Endothelial cell of umbilical vein (primary cell): ENCODE measurements at regions of chr2 and their contacts with region 1.

Region 1: DNA sequence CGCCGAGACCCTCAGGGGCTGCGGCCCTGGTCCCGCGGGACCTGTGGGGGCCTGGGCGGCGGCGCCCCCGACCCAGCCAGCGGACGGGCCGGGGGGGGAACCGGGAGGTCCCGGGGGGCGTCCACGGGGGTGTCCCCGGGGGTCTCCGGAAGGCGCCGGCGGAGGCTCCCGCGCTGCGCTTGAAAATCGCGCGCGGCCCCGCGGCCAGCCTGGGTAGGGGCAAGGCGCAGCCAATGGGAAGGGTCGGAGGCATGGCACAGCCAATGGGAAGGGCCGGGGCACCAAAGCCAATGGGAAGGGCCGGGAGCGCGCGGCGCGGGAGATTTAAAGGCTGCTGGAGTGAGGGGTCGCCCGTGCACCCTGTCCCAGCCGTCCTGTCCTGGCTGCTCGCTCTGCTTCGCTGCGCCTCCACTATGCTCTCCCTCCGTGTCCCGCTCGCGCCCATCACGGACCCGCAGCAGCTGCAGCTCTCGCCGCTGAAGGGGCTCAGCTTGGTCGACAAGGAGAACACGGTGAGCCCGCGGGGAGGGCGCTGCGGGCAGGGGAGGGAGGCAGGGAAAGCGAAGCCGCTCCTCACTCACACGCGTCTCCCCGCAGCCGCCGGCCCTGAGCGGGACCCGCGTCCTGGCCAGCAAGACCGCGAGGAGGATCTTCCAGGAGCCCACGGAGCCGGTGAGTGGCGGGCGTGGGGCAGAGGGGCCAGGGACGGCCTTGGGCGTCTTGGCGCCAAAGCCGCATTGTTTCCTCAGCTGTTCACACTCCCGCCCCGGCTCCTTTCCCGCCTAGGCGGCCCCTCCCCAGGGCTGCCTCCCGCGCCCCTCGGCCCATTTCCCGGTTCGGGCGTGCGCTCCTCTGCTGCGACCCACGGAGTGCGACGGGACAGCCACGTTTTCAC is at the start of gene RRM2:
- DNase-seq: peak; percentile 88
- H3K4me3 ChIP-seq: peak within 1 kb of the TSS; percentile 59 to 91 (median 70)
- H3K27ac ChIP-seq: peak within 1 kb of the TSS; percentile 60
- H3K4me1 ChIP-seq: peaks cover 53% of the 10 kb centered on the region
- H3K27me3 ChIP-seq: no peaks in the 10 kb centered on the region
- CTCF ChIP-seq: no peak
- POLR2A ChIP-seq: peak; percentile 93
- total RNA-seq, gene RRM2: 220 and 246 TPM in 2 replicates

Region 2: DNA sequence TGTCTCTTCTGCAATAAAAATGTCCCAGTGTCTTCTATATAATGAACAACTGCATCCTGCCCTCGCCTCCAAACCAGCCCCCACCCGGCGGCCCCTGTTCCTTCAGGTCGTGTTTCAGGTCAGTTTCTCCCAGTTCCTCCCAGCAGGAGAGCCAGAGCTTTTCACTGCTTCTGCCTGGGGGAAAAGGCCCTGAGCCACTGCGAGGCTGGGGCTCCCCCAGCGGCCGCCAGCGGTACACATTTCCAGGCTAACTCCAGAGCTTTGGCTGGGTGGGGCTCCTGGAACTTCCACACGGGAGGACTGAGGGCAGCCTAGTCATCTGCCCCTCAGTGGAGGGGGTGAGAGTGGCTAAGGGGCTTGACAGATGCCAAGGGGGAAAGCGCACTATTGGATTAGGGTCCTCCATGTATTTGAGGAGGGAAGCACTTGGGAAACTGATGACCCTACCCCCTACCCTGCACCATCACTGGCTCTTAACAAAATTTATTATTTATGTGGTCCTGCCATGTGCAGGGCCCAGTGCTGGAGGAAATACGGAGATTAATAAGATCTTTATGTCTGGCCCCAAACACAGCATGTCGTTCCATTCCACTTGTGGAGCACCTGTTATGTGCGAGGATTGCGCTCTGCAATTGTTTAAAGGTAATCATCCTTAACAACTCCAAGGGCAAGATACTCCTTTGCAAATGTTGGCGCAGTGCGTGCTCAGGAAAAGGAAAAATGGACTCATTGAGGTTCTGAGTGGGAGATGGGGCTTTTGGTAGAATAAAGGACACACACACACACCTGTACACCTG is 25.1 kb before region 1 on chr2:
- CTCF ChIA-PET with region 1: interaction called, 32 read pairs
- POLR2A ChIA-PET with region 1: no interaction called
- dilution Hi-C with region 1: no loop called
- intact Hi-C with region 1: no loop called
- DNase-seq: peak; percentile 54
- H3K4me3 ChIP-seq: no peak overlapping the region
- H3K27ac ChIP-seq: no peak overlapping the region
- H3K4me1 ChIP-seq: no peaks in the 10 kb centered on the region
- H3K27me3 ChIP-seq: peaks cover 0 to 1% of the 10 kb centered on the region in 2 experiments
- CTCF ChIP-seq: peak; percentile 87 to 95
- POLR2A ChIP-seq: no peak

Region 3: GRCh38 chr2:10141736-10142642 is 19.4 kb after region 1 on chr2:
- CTCF ChIA-PET with region 1: interaction called, 54 read pairs
- POLR2A ChIA-PET with region 1: no interaction called
- dilution Hi-C with region 1: no loop called
- intact Hi-C with region 1: no loop called
- DNase-seq: no peak
- H3K4me3 ChIP-seq: no peak overlapping the region
- H3K27ac ChIP-seq: no peak overlapping the region
- H3K4me1 ChIP-seq: no peaks in the 10 kb centered on the region
- H3K27me3 ChIP-seq: no peaks in the 10 kb centered on the region
- CTCF ChIP-seq: peak; percentile 50 to 65
- POLR2A ChIP-seq: no peak

Region 4: GRCh38 chr2:10170256-10170655 is 47.6 kb after region 1 on chr2:
- CTCF ChIA-PET with region 1: interaction called, 57 read pairs
- POLR2A ChIA-PET with region 1: no interaction called
- dilution Hi-C with region 1: no loop called
- intact Hi-C with region 1: no loop called
- DNase-seq: peak; percentile 89
- H3K4me3 ChIP-seq: no peak overlapping the region
- H3K27ac ChIP-seq: peak overlapping the region; percentile 73
- H3K4me1 ChIP-seq: peaks cover 21% of the 10 kb centered on the region
- H3K27me3 ChIP-seq: no peaks in the 10 kb centered on the region
- CTCF ChIP-seq: no peak
- POLR2A ChIP-seq: no peak

Region 5: DNA sequence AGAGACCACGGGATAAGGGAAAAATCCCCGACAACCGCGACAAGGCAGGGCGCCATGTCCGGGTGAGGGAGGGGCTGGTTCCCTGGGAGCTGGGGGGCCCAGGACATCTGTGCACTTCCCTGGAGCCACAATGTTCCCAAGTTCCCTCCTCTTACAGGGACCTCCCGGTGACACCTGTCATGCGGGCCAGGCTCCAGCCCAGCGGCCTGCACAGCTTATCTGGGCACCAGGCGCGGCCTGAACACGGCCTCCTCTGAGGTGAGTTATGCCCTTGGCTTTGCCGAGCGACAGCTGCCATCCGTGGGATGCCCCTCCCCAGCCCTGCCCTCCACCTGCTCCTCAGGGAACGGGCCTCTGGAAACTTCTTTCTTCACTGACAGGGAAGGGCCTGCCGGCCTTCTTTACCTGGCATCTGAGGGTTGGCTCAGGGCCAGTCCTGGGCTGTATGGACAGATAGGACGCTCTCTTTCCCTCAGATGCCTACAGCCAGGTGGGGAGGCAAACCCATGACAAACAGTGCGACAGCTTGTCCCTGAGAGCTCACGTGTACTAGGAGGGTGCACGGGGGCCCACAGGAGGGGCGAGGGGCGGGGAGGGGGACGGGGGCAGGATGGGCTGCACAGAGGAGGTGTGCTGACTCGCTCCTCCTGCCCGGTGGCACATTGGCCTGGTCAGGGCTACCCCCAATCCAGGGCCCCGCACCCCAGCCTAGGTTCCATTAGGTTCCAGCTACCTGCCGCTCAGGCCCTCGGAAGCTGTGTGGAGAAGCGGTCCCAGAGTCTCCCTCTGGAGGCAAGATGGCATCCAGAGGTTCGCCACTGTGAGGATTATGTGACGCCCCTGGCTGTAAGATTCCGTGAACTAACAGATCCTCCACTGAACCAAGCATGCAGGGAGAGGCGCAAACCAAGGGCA is 145.2 kb after region 1 on chr2:
- CTCF ChIA-PET with region 1: interaction called, 12 read pairs
- POLR2A ChIA-PET with region 1: no interaction called
- dilution Hi-C with region 1: no loop called
- intact Hi-C with region 1: loop called (anchors 1 kb)
- DNase-seq: no peak
- H3K4me3 ChIP-seq: no peak overlapping the region
- H3K27ac ChIP-seq: no peak overlapping the region
- H3K4me1 ChIP-seq: peaks cover 3% of the 10 kb centered on the region
- H3K27me3 ChIP-seq: no peaks in the 10 kb centered on the region
- CTCF ChIP-seq: no peak
- POLR2A ChIP-seq: no peak

Region 6: GRCh38 chr2:10346929-10347561 is 224.4 kb after region 1 on chr2:
- CTCF ChIA-PET with region 1: interaction called, 4 read pairs
- POLR2A ChIA-PET with region 1: no interaction called
- dilution Hi-C with region 1: no loop called
- intact Hi-C with region 1: loop called (anchors 1 kb)
- DNase-seq: peak; percentile 23
- H3K4me3 ChIP-seq: no peak overlapping the region
- H3K27ac ChIP-seq: peak overlapping the region; percentile 46
- H3K4me1 ChIP-seq: peaks cover 31% of the 10 kb centered on the region
- H3K27me3 ChIP-seq: no peaks in the 10 kb centered on the region
- CTCF ChIP-seq: peak in 1 of 2 donors; percentile 15
- POLR2A ChIP-seq: no peak

Region 7: DNA sequence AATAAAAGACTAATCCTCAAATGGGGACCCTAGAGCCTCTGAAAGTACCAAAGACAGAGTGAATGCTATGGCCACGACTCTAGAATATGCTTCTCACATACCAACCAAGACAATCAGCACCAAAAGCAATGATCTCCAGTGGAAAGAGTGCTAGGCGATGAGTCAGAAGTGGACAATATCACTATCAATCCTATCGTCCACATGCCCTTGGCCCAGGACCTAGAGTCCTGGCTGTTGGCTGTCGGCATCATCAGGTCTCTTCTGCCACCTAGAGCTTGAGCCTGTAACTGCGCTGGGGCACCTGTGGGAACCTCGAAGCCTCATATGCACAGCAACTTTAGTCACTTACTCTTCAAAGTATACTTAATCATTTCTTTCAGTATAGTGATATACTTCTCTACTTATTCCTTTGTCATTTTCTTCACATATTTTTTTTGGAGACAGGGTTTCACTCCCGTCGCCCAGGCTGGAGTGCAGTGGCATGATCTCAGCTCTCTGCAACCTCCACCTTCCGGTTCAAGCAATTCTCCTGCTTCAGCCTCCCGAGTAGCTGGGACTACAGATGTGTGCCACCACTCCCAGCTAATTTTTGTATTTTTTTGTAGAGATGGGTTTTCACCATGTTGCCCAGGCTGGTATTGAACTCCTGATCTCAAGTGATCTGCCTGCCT is 537.4 kb after region 1 on chr2:
- CTCF ChIA-PET with region 1: interaction called, 15 read pairs
- POLR2A ChIA-PET with region 1: no interaction called
- dilution Hi-C with region 1: no loop called
- intact Hi-C with region 1: loop called (anchors 2 kb)
- DNase-seq: peak; percentile 74
- H3K4me3 ChIP-seq: no peak overlapping the region
- H3K27ac ChIP-seq: no peak overlapping the region
- H3K4me1 ChIP-seq: peaks cover 4% of the 10 kb centered on the region
- H3K27me3 ChIP-seq: no peaks in the 10 kb centered on the region
- CTCF ChIP-seq: peak; percentile 79 to 81
- POLR2A ChIP-seq: no peak